H1 (cell line): ENCODE measurements at regions of chr17 and their contacts with region 1.

Region 1: GRCh38 chr17:1474402-1475189 is 17.9 kb downstream of the MYO1C start:
- DNase-seq: no peak
- H3K4me3 ChIP-seq: no peak overlapping the region
- H3K27ac ChIP-seq: no peak overlapping the region
- H3K4me1 ChIP-seq: no peaks in the 10 kb centered on the region; a peak in 1 of 7 replicates
- H3K27me3 ChIP-seq: no peaks in the 10 kb centered on the region
- CTCF ChIP-seq: no peak
- EP300 ChIP-seq: no peak
- POLR2A ChIP-seq: no peak
- RAD21 ChIP-seq: no peak

Region 2: DNA sequence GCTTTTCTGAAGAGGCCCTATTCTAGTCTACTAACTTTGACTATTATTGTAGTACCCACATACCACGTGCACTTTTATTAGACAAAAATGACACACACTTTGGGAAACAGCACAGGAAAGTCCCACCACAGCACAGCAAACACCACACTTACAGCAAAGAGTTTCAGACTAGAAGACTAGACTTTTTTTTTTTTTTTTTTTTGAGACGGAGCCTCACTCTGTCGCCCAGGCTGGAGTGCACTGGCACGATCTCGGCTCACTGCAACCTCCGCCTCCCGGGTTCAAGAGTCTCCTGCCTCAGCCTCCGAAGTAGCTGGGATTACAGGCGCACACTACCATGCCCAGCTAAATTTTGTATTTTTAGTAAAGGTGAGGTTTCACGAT is 94.7 kb before region 1 on chr17:
- CTCF ChIA-PET with region 1: no interaction called
- POLR2A ChIA-PET with region 1: no interaction called
- DNase-seq: no peak
- H3K4me3 ChIP-seq: no peak overlapping the region
- H3K27ac ChIP-seq: no peak overlapping the region
- H3K4me1 ChIP-seq: peaks cover 0 to 3% (median 1%) of the 10 kb centered on the region in 4 experiments; a peak in 2 of 7 replicates
- H3K27me3 ChIP-seq: no peaks in the 10 kb centered on the region
- CTCF ChIP-seq: no peak
- EP300 ChIP-seq: no peak
- POLR2A ChIP-seq: no peak
- RAD21 ChIP-seq: no peak

Region 3: GRCh38 chr17:1455797-1456599 is 18.6 kb before region 1 on chr17 and contains the start of gene CRK:
- CTCF ChIA-PET with region 1: interaction called, 4 read pairs
- POLR2A ChIA-PET with region 1: interaction called, 10 read pairs
- DNase-seq: peak; percentile 85 to 99
- H3K4me3 ChIP-seq: peak within 1 kb of the TSS; percentile 75 to 92 (median 88)
- H3K27ac ChIP-seq: peak within 1 kb of the TSS; percentile 84
- H3K4me1 ChIP-seq: peaks cover 0 to 6% (median 3%) of the 10 kb centered on the region in 4 experiments; a peak in 3 of 7 replicates
- H3K27me3 ChIP-seq: no peaks in the 10 kb centered on the region
- CTCF ChIP-seq: no peak
- EP300 ChIP-seq: no peak
- POLR2A ChIP-seq: peak; percentile 74 to 79
- RAD21 ChIP-seq: no peak
- total RNA-seq, gene CRK: 51.9 and 57.1 TPM in 2 replicates